CD14-positive monocyte (primary cell): ENCODE measurements at regions of chr1 and their contacts with region 1.

Region 1: DNA sequence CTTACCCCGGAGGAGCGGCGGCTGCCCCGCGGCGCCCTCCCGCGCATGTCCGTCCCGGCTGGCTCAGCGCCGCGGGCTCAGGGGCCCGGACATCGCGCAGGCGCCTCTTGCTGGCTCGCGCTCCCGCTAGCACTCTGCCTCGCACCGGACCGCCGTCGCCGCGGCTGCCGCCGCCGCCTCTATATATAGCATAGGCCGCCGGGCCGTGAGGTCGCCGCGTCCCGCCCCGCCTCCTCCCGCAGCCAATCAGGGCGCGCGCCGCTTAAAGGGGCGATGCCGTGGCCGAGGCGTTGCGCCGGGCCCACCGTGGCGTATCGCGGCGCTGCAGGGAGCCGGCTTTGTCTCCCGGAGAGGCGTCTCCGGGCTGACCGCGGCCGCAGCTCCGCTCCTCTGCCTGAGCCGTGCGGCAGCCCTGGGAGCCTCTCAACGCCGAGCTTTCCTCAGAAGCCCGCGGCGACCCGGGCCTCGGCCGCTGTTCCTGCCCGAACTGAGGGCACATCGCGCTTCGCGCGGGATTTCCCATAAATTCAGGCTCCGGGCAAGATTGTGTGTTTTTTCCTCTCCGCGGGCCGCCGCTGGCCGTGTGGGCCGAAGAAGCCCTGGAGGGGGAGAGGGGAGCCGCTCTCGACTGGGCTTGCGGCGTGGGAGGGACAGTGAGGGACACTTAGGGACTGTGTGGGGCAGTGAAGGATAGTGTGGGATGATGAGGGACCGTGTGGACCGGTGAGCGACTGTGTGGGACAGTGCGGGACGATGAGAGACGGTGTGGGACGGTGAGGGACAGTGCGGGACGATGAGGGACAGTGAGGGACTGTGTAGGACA is at the start of gene ERRFI1:
- DNase-seq: peak; percentile 85 to 89 (median 89)
- H3K4me3 ChIP-seq: peak within 1 kb of the TSS; percentile 7 to 68 (median 29)
- H3K4me3 Mint-ChIP-seq: peak within 1 kb of the TSS; percentile 92 to 97
- H3K27ac ChIP-seq: no peak within 1 kb of the TSS
- H3K27ac Mint-ChIP-seq: peak within 1 kb of the TSS in 4 of 7 donors; percentile 7 to 71 (median 42)
- H3K4me1 ChIP-seq: peaks cover 10 to 19% of the 10 kb centered on the region in 2 donors
- H3K4me1 Mint-ChIP-seq: peaks cover 12% of the 10 kb centered on the region
- H3K27me3 ChIP-seq: peaks cover 32 to 77% of the 10 kb centered on the region in 2 donors
- H3K27me3 Mint-ChIP-seq: peaks cover 53 to 78% (median 55%) of the 10 kb centered on the region in 3 donors
- CTCF ChIP-seq: no peak
- polyA plus RNA-seq, gene ERRFI1: 0.08 to 1.5 (median 0.28) TPM

Region 2: GRCh38 chr1:8238851-8239305 is 212.5 kb after region 1 on chr1:
- intact Hi-C with region 1: loop called in 1 of 2 experiments (anchors 10 kb)
- DNase-seq: no peak
- H3K4me3 ChIP-seq: no peak overlapping the region
- H3K4me3 Mint-ChIP-seq: no peak overlapping the region
- H3K27ac ChIP-seq: no peak overlapping the region
- H3K27ac Mint-ChIP-seq: no peak overlapping the region
- H3K4me1 ChIP-seq: no peaks in the 10 kb centered on the region
- H3K4me1 Mint-ChIP-seq: peaks cover 14% of the 10 kb centered on the region
- H3K27me3 ChIP-seq: no peaks in the 10 kb centered on the region
- H3K27me3 Mint-ChIP-seq: peaks cover 5 to 16% (median 14%) of the 10 kb centered on the region in 3 donors
- CTCF ChIP-seq: peak; percentile 43

Region 3: DNA sequence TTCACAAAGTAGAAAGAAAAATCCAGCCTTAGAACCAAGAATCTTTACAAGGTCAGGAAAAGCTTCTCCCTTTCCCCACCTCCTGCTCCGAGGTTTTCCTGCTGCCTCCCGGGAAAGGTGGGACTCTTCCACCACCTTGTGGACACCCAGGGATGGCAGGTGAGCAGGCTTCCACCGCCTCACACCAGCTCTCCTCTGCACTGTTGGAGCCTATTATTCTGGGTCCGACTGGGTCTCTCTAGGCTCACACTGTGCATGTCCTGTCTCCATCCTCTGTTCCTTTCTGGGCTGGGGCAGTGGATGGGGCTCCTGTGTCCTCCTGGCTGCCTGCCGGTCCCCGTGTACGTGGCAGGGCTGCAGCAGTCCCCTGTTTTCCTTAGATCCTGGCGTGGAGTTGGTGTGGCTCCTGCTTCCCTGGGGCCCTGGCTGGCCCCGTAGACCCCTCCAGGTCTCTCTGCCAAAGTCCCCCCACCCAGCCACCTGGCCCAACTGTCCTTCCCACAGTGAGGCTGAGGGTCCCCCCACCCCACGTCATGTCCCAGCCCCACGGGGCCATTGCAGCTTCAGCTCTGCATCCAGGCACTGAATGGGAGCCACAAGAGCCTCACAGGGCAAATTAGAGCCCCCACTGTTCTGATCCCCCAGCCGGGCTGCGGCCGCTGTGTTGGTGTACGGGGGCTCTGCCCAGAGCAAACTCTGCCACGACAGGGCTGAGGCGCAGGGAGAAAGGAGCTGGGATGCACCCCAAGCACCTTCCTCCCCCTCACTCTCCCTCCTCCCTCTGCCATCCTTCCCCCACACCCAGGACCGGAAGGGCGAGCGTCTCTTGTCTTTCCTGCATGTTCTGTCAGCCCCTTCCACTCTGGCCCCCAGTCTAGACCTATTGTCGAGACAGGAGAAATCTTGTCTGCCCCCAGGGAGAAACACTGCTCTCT is 288.2 kb after region 1 on chr1:
- intact Hi-C with region 1: loop called in 1 of 2 experiments (anchors 10 kb)
- DNase-seq: peak; percentile 11 to 27 (median 24)
- H3K4me3 ChIP-seq: no peak overlapping the region
- H3K4me3 Mint-ChIP-seq: peak overlapping the region in 1 of 2 donors; percentile 62
- H3K27ac ChIP-seq: no peak overlapping the region
- H3K27ac Mint-ChIP-seq: no peak overlapping the region
- H3K4me1 ChIP-seq: peaks cover 10 to 14% of the 10 kb centered on the region in 2 donors
- H3K4me1 Mint-ChIP-seq: peaks cover 20% of the 10 kb centered on the region
- H3K27me3 ChIP-seq: peaks cover 3 to 52% of the 10 kb centered on the region in 2 donors
- H3K27me3 Mint-ChIP-seq: peaks cover 40 to 60% (median 52%) of the 10 kb centered on the region in 3 donors
- CTCF ChIP-seq: peak; percentile 71